ENCODE measurements at regions of chr14 and their contacts with region 1.

Region 1: GRCh38 chr14:104749111-104749649 is 3.8 kb upstream of the SIVA1 start:
- DNase-seq: no peak
- H3K4me3 ChIP-seq: no peak overlapping the region
- H3K27ac ChIP-seq: no peak overlapping the region
- H3K4me1 ChIP-seq: peaks cover 4 to 43% (median 21%) of the 10 kb centered on the region in 4 experiments
- H3K27me3 ChIP-seq: no peaks in the 10 kb centered on the region

Region 2: DNA sequence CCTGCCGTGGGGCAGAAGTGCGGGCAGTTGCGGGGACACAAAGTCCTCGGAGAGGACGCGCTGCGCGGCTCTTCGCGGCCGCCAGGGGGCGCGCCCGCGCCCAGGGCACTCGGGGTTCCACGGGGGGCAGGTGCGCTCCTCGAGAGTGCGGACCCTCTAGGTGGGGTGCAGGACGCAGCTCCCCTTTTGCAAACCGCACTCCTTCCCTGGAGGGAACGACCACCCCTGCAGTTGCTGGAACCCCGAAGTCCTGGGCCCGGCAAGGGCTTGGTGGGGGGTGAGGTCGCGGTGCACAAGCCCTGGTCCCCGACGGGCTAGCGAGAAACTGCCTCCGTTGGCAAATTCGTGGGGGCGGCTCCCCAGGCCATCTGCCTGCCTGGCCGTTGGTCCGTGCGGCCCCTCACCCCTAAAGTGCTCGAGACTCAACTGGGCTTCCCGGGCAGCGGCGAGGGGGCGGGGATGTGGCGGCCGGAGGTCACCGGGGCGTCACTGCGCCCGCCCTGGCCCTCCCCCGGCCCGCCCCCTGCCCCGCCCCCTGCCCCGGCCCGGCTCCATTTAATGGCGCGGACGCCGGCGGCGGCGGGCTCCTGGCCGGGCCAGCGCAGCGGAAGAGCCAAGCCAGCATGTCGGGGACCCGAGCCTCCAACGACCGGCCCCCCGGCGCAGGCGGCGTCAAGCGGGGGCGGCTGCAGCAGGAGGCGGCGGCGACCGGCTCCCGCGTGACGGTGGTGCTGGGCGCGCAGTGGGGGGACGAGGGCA is 25.4 kb before region 1 on chr14 and contains the start of gene ADSS1:
- CTCF ChIA-PET with region 1: interaction called, 31 read pairs
- POLR2A ChIA-PET with region 1: no interaction called
- DNase-seq: peak; percentile 36 to 69 (median 66)
- H3K4me3 ChIP-seq: peak within 1 kb of the TSS; percentile 34 to 83 (median 69)
- H3K27ac ChIP-seq: no peak within 1 kb of the TSS
- H3K4me1 ChIP-seq: peaks cover 0 to 17% (median 12%) of the 10 kb centered on the region in 4 experiments
- H3K27me3 ChIP-seq: peaks cover 0 to 3% (median 0%) of the 10 kb centered on the region in 5 experiments

Measured in common myeloid progenitor, CD34-positive (primary cell).